ENCODE measurements at regions of chr11 and their contacts with region 1.

Region 1: DNA sequence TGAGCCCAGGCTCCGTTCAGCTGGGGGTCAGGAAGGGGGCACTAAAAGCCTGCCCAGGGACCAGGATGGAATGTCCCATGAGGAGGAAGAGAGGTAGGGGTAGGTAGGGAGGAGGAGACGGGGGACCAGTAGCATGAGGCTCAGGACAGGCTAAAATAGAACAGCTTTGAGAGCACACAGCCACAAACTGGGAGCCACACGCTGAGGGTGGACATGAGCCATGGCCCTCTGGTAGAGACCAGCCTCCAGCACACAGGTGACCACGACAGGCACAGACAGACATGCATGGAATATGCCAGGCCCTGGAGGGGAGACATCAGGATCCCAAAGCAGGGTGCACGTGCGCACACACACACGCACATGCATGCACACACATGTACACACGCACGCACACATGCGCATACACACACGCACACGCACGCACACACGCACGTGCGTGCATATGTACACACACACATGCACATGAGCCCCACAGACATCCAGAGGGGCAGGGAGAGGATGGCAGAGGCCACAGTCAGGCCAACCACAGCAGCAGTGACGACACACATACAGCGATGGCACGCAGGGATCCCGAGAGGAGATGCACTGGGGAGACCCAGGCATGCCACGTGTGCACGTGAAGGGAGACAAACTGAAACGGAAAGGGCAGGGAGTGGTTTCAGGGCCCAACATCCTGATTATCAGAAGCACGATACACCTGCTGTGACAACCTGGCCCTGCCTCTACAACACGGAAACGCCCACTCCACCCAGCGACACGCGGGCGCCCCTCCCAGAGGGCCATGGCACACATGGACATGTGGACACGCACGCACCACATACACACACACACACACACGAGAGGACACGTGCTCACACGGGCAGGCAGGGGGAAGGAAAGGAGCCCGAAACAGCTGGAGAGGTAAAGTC is 25.7 kb downstream of the LRRC10B start:
- DNase-seq: no peak
- ATAC-seq: no peak

Region 2: DNA sequence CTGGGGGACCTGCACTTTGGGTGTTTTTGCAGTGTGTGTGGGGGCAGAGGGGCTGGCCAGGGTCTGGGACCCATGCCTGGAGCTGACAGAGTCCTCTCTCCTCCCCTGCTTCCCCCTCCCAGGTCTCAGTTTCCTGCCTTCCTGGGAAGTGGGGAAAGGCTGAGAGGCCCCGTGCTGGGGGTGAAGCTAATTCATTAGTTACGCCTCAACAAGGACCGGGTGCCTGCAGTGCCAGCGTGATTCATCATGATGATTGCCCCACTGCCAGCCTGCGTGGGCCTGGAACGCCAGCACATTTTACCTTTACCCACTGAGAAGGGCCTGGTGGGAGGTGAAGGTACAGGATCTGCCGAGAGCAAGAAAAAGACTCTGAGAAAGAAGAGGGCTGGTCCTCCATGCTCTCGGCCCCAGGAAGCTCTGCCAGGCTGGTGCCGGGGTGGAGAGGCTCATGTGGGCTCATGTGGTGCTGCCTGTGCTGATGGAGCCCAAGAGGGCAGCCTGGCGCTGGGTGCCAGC is 28.6 kb before region 1 on chr11:
- intact Hi-C with region 1: no loop called
- DNase-seq: peak; percentile 48
- ATAC-seq: no peak

Region 3: GRCh38 chr11:61549662-61550568 is 15.6 kb after region 1 on chr11:
- intact Hi-C with region 1: loop called (anchors 2 kb)
- DNase-seq: peak; percentile 66
- ATAC-seq: peak; percentile 18

Measured in Right ventricle myocardium inferior (tissue), 1 donor.